ENCODE measurements at regions of chr3 and their contacts with region 1.

Region 1: DNA sequence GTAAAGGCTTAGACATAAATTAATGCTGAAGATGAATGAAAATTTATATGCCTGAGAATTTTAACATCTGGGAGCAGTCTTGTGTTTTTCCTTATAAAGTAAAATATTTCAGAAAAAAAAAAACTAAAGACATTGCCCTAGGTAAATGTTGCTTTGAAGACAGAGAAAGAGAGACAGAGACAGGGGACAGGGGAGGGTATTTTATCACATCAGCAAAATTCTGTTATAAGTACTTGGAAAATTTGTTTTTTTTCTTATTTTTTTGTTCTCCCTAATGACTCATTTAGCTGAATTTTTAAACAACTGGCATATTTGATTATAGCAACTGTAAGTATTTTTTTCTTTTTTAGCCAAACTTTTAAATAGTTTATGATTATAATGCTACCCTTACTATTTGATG is 1540.6 kb upstream of the GBE1 start:
- DNase-seq: no peak
- ATAC-seq: no peak
- H3K4me3 ChIP-seq: no peak overlapping the region
- H3K4me3 Mint-ChIP-seq: no peak overlapping the region
- H3K27ac ChIP-seq: no peak overlapping the region
- H3K27ac Mint-ChIP-seq: no peak overlapping the region
- H3K4me1 ChIP-seq: no peaks in the 10 kb centered on the region
- H3K4me1 Mint-ChIP-seq: no peaks in the 10 kb centered on the region
- H3K27me3 ChIP-seq: no peaks in the 10 kb centered on the region
- H3K27me3 Mint-ChIP-seq: no peaks in the 10 kb centered on the region
- CTCF ChIP-seq: no peak

Region 2: DNA sequence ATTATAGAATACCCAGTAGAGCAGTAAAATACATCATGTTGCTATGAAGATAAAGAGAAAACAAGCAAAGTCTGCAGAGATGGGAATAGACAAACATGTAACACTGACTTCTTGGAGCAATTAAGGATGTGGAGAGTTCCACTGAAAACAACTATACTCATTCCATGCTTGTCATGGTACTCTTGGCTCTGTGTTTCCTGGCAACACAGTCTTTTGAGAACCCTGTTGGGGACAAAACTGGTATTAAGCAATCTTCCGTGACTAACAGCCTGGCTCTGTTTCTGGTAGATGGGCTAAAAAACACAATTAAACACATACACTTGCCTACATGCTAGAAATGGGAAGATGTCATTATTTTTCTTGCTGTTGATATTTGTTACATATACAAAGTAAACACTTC is 328.3 kb before region 1 on chr3:
- CTCF ChIA-PET with region 1: no interaction called
- POLR2A ChIA-PET with region 1: no interaction called
- intact Hi-C with region 1: no loop called
- DNase-seq: no peak
- ATAC-seq: no peak
- H3K4me3 ChIP-seq: no peak overlapping the region
- H3K4me3 Mint-ChIP-seq: no peak overlapping the region
- H3K27ac ChIP-seq: no peak overlapping the region
- H3K27ac Mint-ChIP-seq: no peak overlapping the region
- H3K4me1 ChIP-seq: no peaks in the 10 kb centered on the region
- H3K4me1 Mint-ChIP-seq: no peaks in the 10 kb centered on the region
- H3K27me3 ChIP-seq: no peaks in the 10 kb centered on the region
- H3K27me3 Mint-ChIP-seq: no peaks in the 10 kb centered on the region
- CTCF ChIP-seq: no peak

Region 3: GRCh38 chr3:83248454-83248853 is 53.6 kb before region 1 on chr3:
- CTCF ChIA-PET with region 1: no interaction called
- POLR2A ChIA-PET with region 1: no interaction called
- intact Hi-C with region 1: no loop called
- DNase-seq: no peak
- ATAC-seq: no peak
- H3K4me3 ChIP-seq: no peak overlapping the region
- H3K4me3 Mint-ChIP-seq: no peak overlapping the region
- H3K27ac ChIP-seq: no peak overlapping the region
- H3K27ac Mint-ChIP-seq: no peak overlapping the region
- H3K4me1 ChIP-seq: no peaks in the 10 kb centered on the region
- H3K4me1 Mint-ChIP-seq: no peaks in the 10 kb centered on the region
- H3K27me3 ChIP-seq: no peaks in the 10 kb centered on the region
- H3K27me3 Mint-ChIP-seq: no peaks in the 10 kb centered on the region
- CTCF ChIP-seq: no peak

Region 4: DNA sequence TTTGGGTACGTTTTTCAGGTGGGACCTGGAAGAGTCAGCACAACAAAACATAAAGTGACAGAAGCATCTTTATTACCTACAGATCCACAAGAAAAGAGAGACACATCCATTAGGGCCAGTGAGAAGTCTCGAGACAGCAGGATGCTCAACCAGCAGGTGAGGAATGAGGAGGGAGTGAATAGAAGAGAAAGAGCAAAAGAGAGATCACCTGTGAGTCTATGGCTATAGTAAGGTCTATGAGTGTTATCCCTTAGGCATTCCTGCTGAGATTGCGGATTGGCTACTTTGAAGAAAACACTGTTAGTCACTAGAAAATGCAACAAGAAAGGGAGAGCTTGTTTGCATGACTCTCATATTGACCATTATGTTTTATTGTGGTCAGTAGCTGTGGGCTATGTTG is 15.5 kb after region 1 on chr3:
- CTCF ChIA-PET with region 1: no interaction called
- POLR2A ChIA-PET with region 1: no interaction called
- intact Hi-C with region 1: loop called (anchors 1 kb)
- DNase-seq: no peak
- ATAC-seq: no peak
- H3K4me3 ChIP-seq: no peak overlapping the region
- H3K4me3 Mint-ChIP-seq: no peak overlapping the region
- H3K27ac ChIP-seq: no peak overlapping the region
- H3K27ac Mint-ChIP-seq: no peak overlapping the region
- H3K4me1 ChIP-seq: no peaks in the 10 kb centered on the region
- H3K4me1 Mint-ChIP-seq: no peaks in the 10 kb centered on the region
- H3K27me3 ChIP-seq: no peaks in the 10 kb centered on the region
- H3K27me3 Mint-ChIP-seq: no peaks in the 10 kb centered on the region
- CTCF ChIP-seq: no peak

Measured in CD8-positive, alpha-beta T cell (primary cell).